ENCODE measurements at regions of chr6 and their contacts with region 1.

Region 1: GRCh38 chr6:81752138-81752920 is at the start of gene TENT5A:
- DNase-seq: peak; percentile 87
- H3K27ac ChIP-seq: peak within 1 kb of the TSS; percentile 90
- CTCF ChIP-seq: no peak

Region 2: DNA sequence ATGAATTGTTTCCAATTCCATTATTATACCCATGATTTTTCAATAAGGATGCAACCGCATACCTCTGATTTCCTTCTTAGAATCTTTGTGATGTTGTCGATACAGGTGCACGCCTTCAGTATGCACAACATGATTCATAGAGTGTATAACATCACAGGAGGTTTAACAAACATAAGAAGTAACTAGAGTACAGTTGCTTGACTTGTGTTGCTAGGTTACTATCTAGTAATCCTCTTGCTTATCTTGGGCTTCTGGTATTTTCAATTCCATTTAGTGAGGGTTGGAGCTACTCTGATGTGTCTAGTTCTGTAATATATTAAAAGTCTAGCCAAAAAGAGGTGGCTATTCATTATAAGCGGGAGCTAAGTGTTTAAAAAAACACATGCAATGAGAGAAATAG is 85.7 kb after region 1 on chr6:
- CTCF ChIA-PET with region 1: no interaction called
- POLR2A ChIA-PET with region 1: no interaction called
- DNase-seq: no peak
- H3K27ac ChIP-seq: no peak overlapping the region
- CTCF ChIP-seq: no peak

Region 3: GRCh38 chr6:81865712-81866111 is 113.4 kb after region 1 on chr6:
- CTCF ChIA-PET with region 1: no interaction called
- POLR2A ChIA-PET with region 1: no interaction called
- DNase-seq: peak; percentile 39
- H3K27ac ChIP-seq: no peak overlapping the region
- CTCF ChIP-seq: no peak

Region 4: DNA sequence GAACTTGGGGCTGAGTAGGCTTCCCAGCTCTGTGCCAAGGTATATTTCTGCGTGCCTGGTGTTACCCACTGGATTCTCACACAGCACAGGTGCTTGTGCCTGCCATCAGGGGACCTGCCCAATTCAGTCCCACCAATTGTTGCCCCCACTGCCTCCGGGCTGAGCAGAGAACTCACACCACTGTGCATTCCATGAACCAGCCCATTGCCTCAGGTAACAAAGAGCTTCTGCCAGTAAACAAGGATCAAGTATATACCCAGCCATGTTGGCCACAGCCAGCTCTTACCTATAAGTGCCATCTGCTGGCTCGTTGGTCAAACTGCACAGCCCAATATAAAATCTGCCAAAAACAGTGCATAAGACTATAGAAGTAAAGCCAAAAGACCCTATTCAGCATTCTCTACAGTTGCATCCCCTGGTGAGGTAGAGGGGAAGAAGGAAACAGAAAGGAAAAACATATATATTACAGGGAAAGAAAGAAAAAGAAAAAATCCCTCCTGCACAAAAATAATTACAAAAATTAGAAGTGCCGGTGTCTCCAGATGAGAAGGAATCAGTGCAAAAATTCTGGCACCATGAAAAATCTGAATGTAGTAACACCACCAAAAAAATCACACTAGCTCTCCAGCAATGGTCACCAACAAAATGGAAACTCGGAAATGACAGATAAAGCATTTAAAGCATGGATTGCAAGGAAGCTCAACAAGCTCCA is 253.9 kb after region 1 on chr6:
- CTCF ChIA-PET with region 1: interaction called, 13 read pairs
- POLR2A ChIA-PET with region 1: no interaction called
- DNase-seq: no peak
- H3K27ac ChIP-seq: no peak overlapping the region
- CTCF ChIP-seq: peak; percentile 80

Measured in RWPE1 (cell line).